Activated T-helper 2 cell treated with anti-CD3 and anti-CD28 coated beads, Interferon-gamma antibody, Interleukin-2, Interleukin-4, amounts not matched to agents 10 μg/mL and 5 μg/mL and 100 μg/mL, durations not matched to agents 14 hours and 24 hours and 36 hours (primary cell): ENCODE measurements at regions of chr1 and their contacts with region 1.

Region 1: DNA sequence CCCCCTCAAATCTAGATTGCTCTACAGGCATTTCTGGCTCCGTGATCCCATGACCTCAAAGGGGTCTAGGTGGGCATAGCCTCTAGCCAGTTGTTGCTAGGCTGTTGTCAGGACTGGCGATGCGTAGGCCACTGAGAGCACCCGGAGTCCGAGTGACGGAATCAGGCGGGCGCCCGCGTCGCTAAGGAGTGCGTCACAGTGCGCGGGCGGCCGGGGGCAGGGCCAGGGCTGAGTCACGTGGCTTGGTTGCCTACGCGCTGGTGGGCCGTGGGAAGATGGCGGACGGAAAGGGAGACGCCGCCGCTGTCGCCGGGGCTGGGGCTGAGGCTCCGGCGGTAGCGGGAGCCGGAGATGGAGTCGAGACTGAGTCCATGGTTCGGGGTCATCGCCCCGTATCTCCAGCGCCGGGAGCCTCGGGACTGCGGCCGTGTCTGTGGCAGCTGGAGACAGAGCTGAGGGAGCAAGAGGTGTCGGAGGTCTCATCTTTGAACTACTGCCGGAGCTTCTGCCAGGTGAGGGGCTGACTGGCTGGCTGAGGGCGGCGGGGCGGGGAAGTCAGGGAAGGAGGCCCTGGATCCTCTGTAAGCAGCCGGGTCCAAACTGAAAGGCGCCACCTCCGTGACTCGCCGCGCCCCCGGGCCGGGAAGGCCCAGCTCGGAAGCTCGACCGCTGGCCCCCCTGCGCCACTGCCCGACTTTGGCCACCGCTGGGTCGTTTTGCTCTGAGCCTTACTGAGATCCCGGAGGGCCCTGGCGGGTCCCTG is at the start of gene RLF:
- DNase-seq: peak; percentile 94
- H3K4me3 Mint-ChIP-seq: no peak within 1 kb of the TSS
- H3K27ac Mint-ChIP-seq: no peak within 1 kb of the TSS
- H3K4me1 Mint-ChIP-seq: peaks cover 16% of the 10 kb centered on the region
- H3K27me3 Mint-ChIP-seq: peaks cover 3% of the 10 kb centered on the region
- total RNA-seq, gene RLF: 22.3 and 22.6 TPM in 2 replicates

Region 2: DNA sequence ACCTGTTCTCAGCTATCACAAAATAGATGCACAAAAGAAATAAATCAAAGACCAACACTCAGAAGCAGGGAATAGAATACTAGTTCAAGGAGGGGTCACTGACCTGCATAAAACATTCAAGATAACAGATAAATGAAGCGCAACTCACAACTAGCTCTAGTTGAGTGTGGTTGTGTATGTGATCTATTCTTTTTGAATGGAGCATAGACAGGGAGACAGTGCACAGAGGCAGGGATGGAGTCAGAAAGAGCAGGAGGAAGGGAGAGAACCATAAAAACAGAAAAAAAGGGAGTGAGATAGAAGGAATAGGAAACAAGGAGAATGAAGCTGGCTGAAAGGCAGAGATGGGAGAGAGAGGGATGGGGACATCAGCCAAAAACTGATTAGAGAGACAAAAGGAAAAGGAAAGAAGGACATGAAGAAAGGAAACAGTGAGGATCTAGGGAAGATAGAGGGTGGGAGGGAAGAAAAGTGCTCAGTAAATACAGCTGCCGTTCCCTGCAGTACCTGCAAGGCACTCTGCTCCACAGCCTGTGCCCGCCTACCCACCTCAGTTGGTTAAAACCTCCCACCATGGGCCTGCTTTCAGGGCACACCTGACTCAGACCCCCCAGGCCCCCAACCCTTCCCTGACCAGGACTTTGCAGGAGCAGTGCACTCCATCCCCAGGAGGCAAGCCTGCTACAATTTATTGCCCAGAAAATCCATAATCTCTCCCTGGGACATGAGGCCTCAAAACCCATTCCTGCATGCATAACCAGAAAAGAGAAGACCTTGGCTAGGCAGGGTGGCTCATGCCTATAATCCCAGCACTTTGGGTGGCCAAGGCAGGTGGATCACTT is 1729.5 kb before region 1 on chr1:
- intact Hi-C with region 1: no loop called
- DNase-seq: no peak
- H3K4me3 Mint-ChIP-seq: no peak overlapping the region
- H3K27ac Mint-ChIP-seq: no peak overlapping the region
- H3K4me1 Mint-ChIP-seq: no peaks in the 10 kb centered on the region
- H3K27me3 Mint-ChIP-seq: peaks cover 15% of the 10 kb centered on the region

Region 3: DNA sequence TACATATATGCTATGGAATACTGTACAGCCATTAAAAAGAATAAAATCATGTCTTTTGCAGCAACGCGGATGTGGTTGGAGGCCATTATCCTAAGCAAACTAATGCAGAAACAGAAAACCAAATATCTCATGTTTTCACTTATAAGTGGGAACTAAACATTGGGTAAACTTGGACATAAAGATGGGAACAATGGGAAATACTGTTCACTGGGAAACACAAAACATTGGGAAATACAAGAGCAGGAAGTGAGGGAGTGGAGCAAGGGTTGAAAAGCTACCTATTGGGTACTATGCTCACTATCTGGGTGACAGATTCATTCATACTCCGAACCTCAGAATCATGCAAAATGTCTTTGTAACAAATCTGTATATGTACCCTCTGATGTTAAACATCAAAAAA is 46.9 kb before region 1 on chr1:
- intact Hi-C with region 1: no loop called
- DNase-seq: no peak
- H3K4me3 Mint-ChIP-seq: no peak overlapping the region
- H3K27ac Mint-ChIP-seq: no peak overlapping the region
- H3K4me1 Mint-ChIP-seq: no peaks in the 10 kb centered on the region
- H3K27me3 Mint-ChIP-seq: peaks cover 39% of the 10 kb centered on the region

Region 4: DNA sequence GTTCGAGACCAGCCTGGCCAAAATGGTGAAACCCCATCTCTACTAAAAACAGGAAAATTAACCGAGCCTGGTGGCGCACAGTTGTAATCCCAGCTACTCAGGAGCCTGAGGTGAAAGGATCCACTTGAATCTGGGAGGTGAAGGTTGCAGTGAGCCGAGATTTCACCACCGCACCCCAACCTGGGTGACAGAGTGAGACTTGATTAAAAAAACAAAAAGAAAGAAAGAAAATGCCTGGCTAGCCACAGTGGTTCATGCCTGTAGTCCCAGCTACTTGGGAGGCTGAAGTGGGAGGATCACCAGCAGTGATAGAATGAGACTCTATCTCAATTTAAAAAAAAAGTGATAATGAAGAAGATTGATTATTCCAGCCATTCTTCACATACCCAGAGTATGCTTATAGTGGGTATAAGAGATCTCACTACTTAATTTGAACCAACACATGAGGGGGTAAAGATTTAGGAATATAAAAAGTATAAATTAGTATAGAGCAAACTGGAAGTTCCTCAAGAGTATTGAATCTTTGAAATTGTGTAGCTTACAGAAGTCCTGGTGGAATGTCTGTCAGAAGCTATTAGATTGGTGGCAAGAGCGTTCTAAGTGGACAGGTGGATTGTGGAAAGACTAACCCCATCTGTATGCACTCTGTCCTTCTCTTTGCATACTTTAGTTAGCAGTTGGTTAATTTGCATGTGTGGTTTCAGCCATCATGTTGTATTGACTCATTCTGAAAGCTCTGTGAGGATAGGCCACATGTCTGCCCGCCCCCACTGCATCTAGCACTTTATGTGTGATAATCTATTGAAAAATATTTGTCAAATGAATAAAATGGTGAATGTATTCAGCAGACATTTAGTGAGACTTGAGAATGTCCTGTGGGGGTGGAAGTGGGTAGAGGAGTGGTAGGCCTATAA is 24.9 kb after region 1 on chr1:
- intact Hi-C with region 1: loop called (anchors 1 kb)
- DNase-seq: peak; percentile 51
- H3K4me3 Mint-ChIP-seq: peak overlapping the region; percentile 9
- H3K27ac Mint-ChIP-seq: peak overlapping the region; percentile 75
- H3K4me1 Mint-ChIP-seq: peaks cover 63% of the 10 kb centered on the region
- H3K27me3 Mint-ChIP-seq: no peaks in the 10 kb centered on the region

Region 5: GRCh38 chr1:40257688-40258444 is 96.6 kb after region 1 on chr1 and contains the start of gene ZMPSTE24:
- intact Hi-C with region 1: loop called (anchors 1 kb)
- DNase-seq: peak; percentile 95
- H3K4me3 Mint-ChIP-seq: peak within 1 kb of the TSS; percentile 94
- H3K27ac Mint-ChIP-seq: peak within 1 kb of the TSS; percentile 98
- H3K4me1 Mint-ChIP-seq: peaks cover 38% of the 10 kb centered on the region
- H3K27me3 Mint-ChIP-seq: no peaks in the 10 kb centered on the region
- total RNA-seq, gene ZMPSTE24: 48.2 TPM in 2 replicates

Region 6: GRCh38 chr1:40315239-40315794 is 154.0 kb after region 1 on chr1:
- intact Hi-C with region 1: loop called (anchors 5 kb)
- DNase-seq: peak; percentile 81
- H3K4me3 Mint-ChIP-seq: peak overlapping the region; percentile 78
- H3K27ac Mint-ChIP-seq: no peak overlapping the region
- H3K4me1 Mint-ChIP-seq: peaks cover 45% of the 10 kb centered on the region
- H3K27me3 Mint-ChIP-seq: peaks cover 16% of the 10 kb centered on the region

Region 7: GRCh38 chr1:40404670-40405462 is 243.6 kb after region 1 on chr1:
- intact Hi-C with region 1: loop called (anchors 5 kb)
- DNase-seq: no peak
- H3K4me3 Mint-ChIP-seq: peak overlapping the region; percentile 28
- H3K27ac Mint-ChIP-seq: peak overlapping the region; percentile 87
- H3K4me1 Mint-ChIP-seq: peaks cover 46% of the 10 kb centered on the region
- H3K27me3 Mint-ChIP-seq: no peaks in the 10 kb centered on the region